ENCODE measurements at regions of chr2 and their contacts with region 1.

Region 1: DNA sequence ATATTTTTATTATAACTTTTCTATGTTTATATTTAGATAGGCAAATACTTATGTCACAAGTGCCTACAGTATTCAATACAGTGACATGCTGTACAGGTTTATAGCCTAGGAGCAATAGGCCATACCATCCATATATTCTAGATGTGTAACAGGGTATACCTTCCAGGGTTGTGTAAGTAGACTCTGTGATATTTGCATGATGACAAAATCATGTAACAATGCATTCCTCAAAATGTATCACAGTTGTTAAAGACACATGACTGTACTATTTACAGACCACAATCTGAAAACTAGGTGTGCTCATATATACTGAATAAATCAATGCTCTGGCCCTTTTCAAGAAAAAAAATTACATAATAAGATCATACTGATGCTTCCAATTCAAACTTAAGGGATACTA is 433.2 kb upstream of the RGPD4 start:
- DNase-seq: no peak
- H3K4me3 ChIP-seq: no peak overlapping the region
- H3K27ac ChIP-seq: no peak overlapping the region
- H3K4me1 ChIP-seq: no peaks in the 10 kb centered on the region
- H3K27me3 ChIP-seq: no peaks in the 10 kb centered on the region
- CTCF ChIP-seq: no peak

Region 2: DNA sequence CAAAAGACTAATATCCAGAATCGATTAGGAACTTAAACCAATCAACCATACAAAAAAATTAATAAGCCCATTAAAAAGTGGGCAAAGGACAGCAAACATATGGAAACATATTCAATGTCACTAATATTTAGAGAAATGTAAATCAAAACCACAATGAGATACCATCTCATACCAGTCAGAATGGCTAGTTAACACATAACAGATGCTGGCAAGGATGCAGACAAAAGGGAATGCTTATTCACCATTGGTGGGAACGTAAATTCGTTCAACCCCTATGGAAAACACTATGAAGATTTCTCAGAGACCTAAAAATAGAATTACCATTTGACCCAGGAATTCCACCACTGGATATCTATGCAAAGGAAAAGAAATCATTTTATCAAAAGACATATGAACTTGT is 39.3 kb before region 1 on chr2:
- intact Hi-C with region 1: loop called (anchors 2 kb)
- DNase-seq: no peak
- H3K4me3 ChIP-seq: no peak overlapping the region
- H3K27ac ChIP-seq: no peak overlapping the region
- H3K4me1 ChIP-seq: no peaks in the 10 kb centered on the region
- H3K27me3 ChIP-seq: no peaks in the 10 kb centered on the region
- CTCF ChIP-seq: no peak